ENCODE measurements at regions of chr19 and their contacts with region 1.

Region 1: GRCh38 chr19:34487651-34488051 is 6.1 kb downstream of the WTIP start:
- DNase-seq: no peak
- ATAC-seq: no peak
- H3K4me3 ChIP-seq: no peak overlapping the region
- H3K27ac ChIP-seq: no peak overlapping the region
- H3K4me1 ChIP-seq: peaks cover 7 to 41% (median 19%) of the 10 kb centered on the region in 9 donors
- H3K27me3 ChIP-seq: peaks cover 0 to 10% (median 0%) of the 10 kb centered on the region in 7 donors
- CTCF ChIP-seq: no peak

Region 2: GRCh38 chr19:34416021-34416545 is 71.6 kb before region 1 on chr19:
- intact Hi-C with region 1: no loop called
- DNase-seq: no peak
- ATAC-seq: no peak
- H3K4me3 ChIP-seq: no peak overlapping the region
- H3K27ac ChIP-seq: no peak overlapping the region
- H3K4me1 ChIP-seq: no peaks in the 10 kb centered on the region
- H3K27me3 ChIP-seq: no peaks in the 10 kb centered on the region
- CTCF ChIP-seq: no peak

Region 3: DNA sequence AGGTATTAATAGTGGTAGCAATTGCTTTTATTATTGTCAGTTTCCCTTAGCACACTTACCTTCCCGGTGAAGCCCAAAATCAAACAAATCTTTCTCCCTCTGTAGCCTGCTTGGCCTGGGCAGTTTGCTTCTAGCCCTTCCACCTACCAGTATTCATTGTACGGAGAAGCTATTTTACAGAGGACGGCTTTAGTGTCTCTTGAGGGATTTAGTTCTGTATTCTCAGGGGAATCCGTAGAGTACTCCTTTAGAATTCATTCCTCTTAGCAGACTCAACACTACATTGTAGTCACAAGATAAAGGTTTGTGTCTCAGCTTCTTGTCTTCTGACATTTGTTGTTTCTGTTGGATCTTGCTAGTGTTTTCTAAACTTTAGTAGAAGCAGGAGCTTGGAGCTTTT is 30.2 kb before region 1 on chr19:
- intact Hi-C with region 1: loop called in 1 of 10 experiments (anchors 2 kb)
- DNase-seq: no peak
- ATAC-seq: no peak
- H3K4me3 ChIP-seq: no peak overlapping the region
- H3K27ac ChIP-seq: no peak overlapping the region
- H3K4me1 ChIP-seq: peaks cover 8 to 57% (median 38%) of the 10 kb centered on the region in 9 donors
- H3K27me3 ChIP-seq: no peaks in the 10 kb centered on the region
- CTCF ChIP-seq: no peak